ENCODE measurements at regions of chr19 and their contacts with region 1.

Region 1: GRCh38 chr19:48872182-48872883 is at the start of gene PPP1R15A:
- H3K4me3 ChIP-seq: peak within 1 kb of the TSS; percentile 80
- H3K27ac ChIP-seq: peak within 1 kb of the TSS; percentile 93
- H3K4me1 ChIP-seq: peaks cover 32% of the 10 kb centered on the region
- CTCF ChIP-seq: 0 out of 2 replicates have a peak, but pooled peaks have one; percentile 32

Region 2: DNA sequence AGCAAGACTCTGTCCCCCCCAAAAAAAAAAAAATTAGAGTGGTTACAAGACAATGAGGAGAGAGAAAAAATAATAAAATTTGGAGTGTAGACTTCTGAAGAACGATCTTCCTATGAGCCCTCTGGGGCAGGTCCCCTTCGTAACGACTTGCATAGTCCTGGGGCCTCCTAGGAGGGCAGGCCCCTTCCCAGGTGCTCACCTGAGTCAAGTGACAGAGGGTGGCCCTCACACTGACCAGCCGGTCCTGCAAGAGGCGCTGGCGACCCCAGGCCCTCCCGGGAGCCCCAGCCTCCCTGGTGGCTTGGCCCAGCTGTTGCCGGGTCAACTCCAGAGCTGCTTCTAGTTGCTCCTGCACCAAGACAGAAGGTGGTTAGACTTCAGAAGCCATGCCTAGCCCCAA is 18.9 kb before region 1 on chr19:
- CTCF ChIA-PET with region 1: no interaction called
- POLR2A ChIA-PET with region 1: interaction called, 13 read pairs
- H3K4me3 ChIP-seq: no peak overlapping the region
- H3K27ac ChIP-seq: no peak overlapping the region
- H3K4me1 ChIP-seq: no peaks in the 10 kb centered on the region; the same call in 1 of the 2 replicates
- CTCF ChIP-seq: no peak

Region 3: GRCh38 chr19:48933382-48933932 is 61.1 kb after region 1 on chr19 and contains the start of gene DHDH:
- CTCF ChIA-PET with region 1: no interaction called
- POLR2A ChIA-PET with region 1: interaction called, 18 read pairs
- H3K4me3 ChIP-seq: peak within 1 kb of the TSS; percentile 35
- H3K27ac ChIP-seq: no peak within 1 kb of the TSS
- H3K4me1 ChIP-seq: peaks cover 3% of the 10 kb centered on the region; the same call in 1 of the 2 replicates
- CTCF ChIP-seq: no peak; the same call in 1 of the 2 replicates

Region 4: DNA sequence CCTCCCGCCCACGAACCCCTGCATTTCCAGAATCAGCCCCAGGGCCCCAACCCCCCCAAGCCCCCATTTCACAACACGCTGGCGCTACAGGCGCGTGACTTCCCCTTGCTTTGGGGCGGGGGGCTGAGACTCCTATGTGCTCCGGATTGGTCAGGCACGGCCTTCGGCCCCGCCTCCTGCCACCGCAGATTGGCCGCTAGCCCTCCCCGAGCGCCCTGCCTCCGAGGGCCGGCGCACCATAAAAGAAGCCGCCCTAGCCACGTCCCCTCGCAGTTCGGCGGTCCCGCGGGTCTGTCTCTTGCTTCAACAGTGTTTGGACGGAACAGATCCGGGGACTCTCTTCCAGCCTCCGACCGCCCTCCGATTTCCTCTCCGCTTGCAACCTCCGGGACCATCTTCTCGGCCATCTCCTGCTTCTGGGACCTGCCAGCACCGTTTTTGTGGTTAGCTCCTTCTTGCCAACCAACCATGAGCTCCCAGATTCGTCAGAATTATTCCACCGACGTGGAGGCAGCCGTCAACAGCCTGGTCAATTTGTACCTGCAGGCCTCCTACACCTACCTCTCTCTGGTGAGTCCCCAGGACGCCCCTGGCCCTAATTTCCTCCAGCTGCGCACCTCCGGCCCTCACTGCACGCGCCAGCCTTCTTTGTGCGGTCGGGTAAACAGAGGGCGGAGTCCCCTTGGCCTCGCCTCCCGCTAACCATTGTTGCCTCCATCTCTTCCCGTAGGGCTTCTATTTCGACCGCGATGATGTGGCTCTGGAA is 92.9 kb after region 1 on chr19 and contains the start of gene FTL:
- CTCF ChIA-PET with region 1: interaction called, 10 read pairs
- POLR2A ChIA-PET with region 1: interaction called, 16 read pairs
- H3K4me3 ChIP-seq: peak within 1 kb of the TSS; percentile 40
- H3K27ac ChIP-seq: peak within 1 kb of the TSS; percentile 82
- H3K4me1 ChIP-seq: peaks cover 20% of the 10 kb centered on the region
- CTCF ChIP-seq: 0 out of 2 replicates have a peak, but pooled peaks have one; percentile 12

Measured in HEK293 (cell line).